ENCODE measurements at regions of chr6 and their contacts with region 1.

Region 1: GRCh38 chr6:122717350-122717749 is 62.2 kb upstream of the FABP7 start:
- DNase-seq: no peak
- H3K4me3 ChIP-seq: no peak overlapping the region
- H3K27ac ChIP-seq: no peak overlapping the region
- H3K4me1 ChIP-seq: peaks cover 9% of the 10 kb centered on the region
- H3K27me3 ChIP-seq: no peaks in the 10 kb centered on the region
- CTCF ChIP-seq: no peak

Region 2: GRCh38 chr6:122202576-122203137 is 514.7 kb before region 1 on chr6:
- CTCF ChIA-PET with region 1: no interaction called
- dilution Hi-C with region 1: no loop called
- in situ Hi-C with region 1: no loop called
- intact Hi-C with region 1: no loop called
- DNase-seq: no peak
- H3K4me3 ChIP-seq: no peak overlapping the region
- H3K27ac ChIP-seq: no peak overlapping the region
- H3K4me1 ChIP-seq: no peaks in the 10 kb centered on the region
- H3K27me3 ChIP-seq: peaks cover 1% of the 10 kb centered on the region
- CTCF ChIP-seq: no peak

Region 3: GRCh38 chr6:122381497-122382265 is 335.7 kb before region 1 on chr6:
- CTCF ChIA-PET with region 1: no interaction called
- dilution Hi-C with region 1: no loop called
- in situ Hi-C with region 1: no loop called
- intact Hi-C with region 1: no loop called
- DNase-seq: peak; percentile 48
- H3K4me3 ChIP-seq: no peak overlapping the region
- H3K27ac ChIP-seq: no peak overlapping the region
- H3K4me1 ChIP-seq: no peaks in the 10 kb centered on the region
- H3K27me3 ChIP-seq: no peaks in the 10 kb centered on the region
- CTCF ChIP-seq: peak; percentile 70 to 84

Region 4: DNA sequence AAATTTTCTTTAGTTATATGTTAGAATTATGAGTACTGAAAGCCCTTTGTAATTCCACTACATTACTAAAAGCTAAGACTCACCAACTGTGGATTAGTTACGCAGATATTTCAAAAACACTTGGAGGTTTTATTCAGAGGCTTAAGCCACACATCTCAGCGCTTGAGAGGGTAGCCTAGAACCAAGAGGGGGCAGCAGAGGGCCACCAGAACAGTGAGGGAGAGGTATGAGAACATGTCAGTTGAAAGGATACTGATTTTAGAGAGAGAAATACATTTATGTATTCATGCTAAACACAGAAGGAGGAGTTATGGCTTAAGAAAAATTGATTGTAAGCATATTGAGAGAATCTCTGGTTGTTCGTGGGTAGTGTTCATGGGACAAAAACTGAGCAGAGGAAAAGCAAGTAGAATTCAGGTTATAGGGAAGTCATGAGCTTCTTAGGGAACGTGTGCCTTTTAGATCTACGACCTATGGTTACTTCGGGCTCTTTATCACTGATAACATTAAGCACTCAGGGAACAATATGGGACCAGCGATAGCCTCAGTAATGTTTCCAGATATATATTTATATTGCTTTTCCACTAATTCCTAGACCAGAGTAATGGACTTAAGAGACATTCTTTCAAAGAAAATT is 225.3 kb before region 1 on chr6:
- CTCF ChIA-PET with region 1: no interaction called
- dilution Hi-C with region 1: no loop called
- in situ Hi-C with region 1: loop called (anchors 10 to 25 kb)
- intact Hi-C with region 1: no loop called
- DNase-seq: peak; percentile 60
- H3K4me3 ChIP-seq: no peak overlapping the region
- H3K27ac ChIP-seq: no peak overlapping the region
- H3K4me1 ChIP-seq: no peaks in the 10 kb centered on the region
- H3K27me3 ChIP-seq: no peaks in the 10 kb centered on the region
- CTCF ChIP-seq: peak; percentile 91 to 93

Region 5: GRCh38 chr6:122673343-122673961 is 43.9 kb before region 1 on chr6:
- CTCF ChIA-PET with region 1: no interaction called
- dilution Hi-C with region 1: no loop called
- in situ Hi-C with region 1: no loop called
- intact Hi-C with region 1: no loop called
- DNase-seq: peak; percentile 79
- H3K4me3 ChIP-seq: no peak overlapping the region
- H3K27ac ChIP-seq: no peak overlapping the region
- H3K4me1 ChIP-seq: peaks cover 13% of the 10 kb centered on the region
- H3K27me3 ChIP-seq: no peaks in the 10 kb centered on the region
- CTCF ChIP-seq: no peak

Region 6: DNA sequence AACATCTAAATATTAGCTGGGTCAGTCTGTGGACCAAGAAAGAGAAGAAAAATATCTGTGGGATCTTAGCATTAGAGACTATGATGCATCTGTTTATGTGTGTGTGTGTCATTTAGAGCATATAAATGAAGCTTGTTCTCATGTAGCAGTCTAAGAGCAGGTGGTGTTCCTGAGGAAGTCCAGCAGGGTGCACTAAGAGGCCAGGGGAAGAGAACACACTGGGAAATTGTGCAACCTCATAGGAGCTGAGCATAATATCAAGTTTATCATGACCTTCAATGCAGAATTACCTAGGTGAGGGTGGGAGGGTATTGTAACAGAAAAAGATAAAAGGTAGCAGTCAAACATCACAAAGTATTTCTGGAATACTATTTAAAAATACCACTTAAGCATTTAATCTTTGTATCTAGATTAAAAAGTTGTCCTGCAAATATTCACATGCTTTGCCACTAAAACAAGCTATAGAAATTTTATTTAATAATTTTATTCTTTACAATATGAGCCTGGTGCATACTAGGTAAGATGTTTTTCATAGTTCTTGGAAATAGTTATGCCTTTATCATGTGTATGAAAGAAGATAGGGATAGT is 152.2 kb after region 1 on chr6:
- CTCF ChIA-PET with region 1: no interaction called
- dilution Hi-C with region 1: no loop called
- in situ Hi-C with region 1: no loop called
- intact Hi-C with region 1: no loop called
- DNase-seq: peak; percentile 49
- H3K4me3 ChIP-seq: no peak overlapping the region
- H3K27ac ChIP-seq: no peak overlapping the region
- H3K4me1 ChIP-seq: no peaks in the 10 kb centered on the region
- H3K27me3 ChIP-seq: no peaks in the 10 kb centered on the region
- CTCF ChIP-seq: peak; percentile 86 to 88